Endothelial cell of umbilical vein (primary cell): ENCODE measurements at regions of chr13 and their contacts with region 1.

Region 1: DNA sequence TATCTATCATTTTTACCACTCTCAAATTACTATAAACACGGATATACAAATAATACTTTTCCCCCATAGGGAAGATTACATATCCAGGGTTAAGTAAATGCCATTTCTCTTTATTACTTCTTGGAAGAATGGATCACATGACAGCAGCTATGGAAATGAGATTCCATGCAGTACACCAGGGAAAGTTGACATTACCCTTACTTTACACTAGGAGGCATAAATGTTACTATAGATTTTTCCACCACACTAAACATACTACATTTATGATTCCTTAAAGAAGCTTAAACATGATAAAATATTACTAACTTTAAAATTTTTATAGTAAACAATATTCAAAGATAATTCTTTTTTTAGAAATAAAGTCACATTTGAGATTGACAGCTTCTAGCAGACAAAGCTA is 611.4 kb downstream of the PCDH9 start:
- DNase-seq: peak; percentile 60
- H3K4me3 ChIP-seq: no peak overlapping the region
- H3K27ac ChIP-seq: no peak overlapping the region
- H3K4me1 ChIP-seq: no peaks in the 10 kb centered on the region
- H3K27me3 ChIP-seq: no peaks in the 10 kb centered on the region
- CTCF ChIP-seq: peak; percentile 23 to 24
- POLR2A ChIP-seq: no peak

Region 2: GRCh38 chr13:66323745-66324144 is 295.0 kb before region 1 on chr13:
- CTCF ChIA-PET with region 1: no interaction called
- POLR2A ChIA-PET with region 1: no interaction called
- dilution Hi-C with region 1: no loop called
- intact Hi-C with region 1: no loop called
- DNase-seq: no peak
- H3K4me3 ChIP-seq: no peak overlapping the region
- H3K27ac ChIP-seq: no peak overlapping the region
- H3K4me1 ChIP-seq: no peaks in the 10 kb centered on the region
- H3K27me3 ChIP-seq: no peaks in the 10 kb centered on the region
- CTCF ChIP-seq: no peak
- POLR2A ChIP-seq: no peak

Region 3: GRCh38 chr13:66359910-66360552 is 258.7 kb before region 1 on chr13:
- CTCF ChIA-PET with region 1: no interaction called
- POLR2A ChIA-PET with region 1: no interaction called
- dilution Hi-C with region 1: no loop called
- intact Hi-C with region 1: no loop called
- DNase-seq: no peak
- H3K4me3 ChIP-seq: no peak overlapping the region
- H3K27ac ChIP-seq: no peak overlapping the region
- H3K4me1 ChIP-seq: no peaks in the 10 kb centered on the region
- H3K27me3 ChIP-seq: no peaks in the 10 kb centered on the region
- CTCF ChIP-seq: no peak
- POLR2A ChIP-seq: no peak

Region 4: DNA sequence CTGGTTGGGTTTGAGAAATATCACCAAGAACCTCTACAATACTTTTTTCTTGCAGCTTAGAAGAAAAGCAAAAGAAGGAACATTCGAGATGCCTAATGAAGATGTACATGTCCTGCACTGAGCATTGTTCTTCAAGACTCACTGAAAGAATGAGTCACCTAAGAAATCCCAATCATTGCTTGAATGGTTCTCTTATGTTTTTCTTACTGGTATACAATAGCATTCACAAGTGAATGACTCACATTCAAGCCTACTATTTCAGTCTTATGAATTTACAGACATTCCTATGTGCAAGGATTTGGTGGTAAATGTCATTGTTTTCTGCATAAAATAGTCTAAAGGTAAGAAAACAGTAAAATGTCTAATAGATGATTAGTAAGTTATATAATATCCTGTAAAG is 16.8 kb after region 1 on chr13:
- CTCF ChIA-PET with region 1: interaction called, 29 read pairs
- POLR2A ChIA-PET with region 1: no interaction called
- dilution Hi-C with region 1: no loop called
- intact Hi-C with region 1: no loop called
- DNase-seq: peak; percentile 89
- H3K4me3 ChIP-seq: no peak overlapping the region
- H3K27ac ChIP-seq: peak overlapping the region; percentile 70
- H3K4me1 ChIP-seq: peaks cover 18% of the 10 kb centered on the region
- H3K27me3 ChIP-seq: no peaks in the 10 kb centered on the region
- CTCF ChIP-seq: no peak
- POLR2A ChIP-seq: no peak

Region 5: DNA sequence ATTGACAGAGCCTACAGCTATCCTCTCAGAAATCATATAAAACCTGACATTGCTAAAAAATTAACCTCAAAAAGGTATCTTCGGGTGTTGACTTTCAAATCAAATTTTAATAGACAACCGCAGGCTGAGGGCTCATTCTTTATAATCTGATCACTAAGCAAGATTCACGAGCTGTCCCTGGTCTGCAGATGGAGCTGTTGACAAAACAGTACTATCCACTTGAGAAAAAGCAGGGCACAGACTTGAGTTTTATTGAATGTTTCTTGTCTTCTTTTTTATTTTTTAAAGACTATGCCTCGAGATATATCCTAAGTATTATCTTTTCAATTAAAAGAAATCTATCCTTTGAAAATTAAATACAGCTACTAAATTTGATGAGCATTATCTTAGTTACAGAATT is 70.9 kb after region 1 on chr13:
- CTCF ChIA-PET with region 1: interaction called, 38 read pairs
- POLR2A ChIA-PET with region 1: no interaction called
- dilution Hi-C with region 1: no loop called
- intact Hi-C with region 1: loop called (anchors 1 kb)
- DNase-seq: peak; percentile 26
- H3K4me3 ChIP-seq: no peak overlapping the region
- H3K27ac ChIP-seq: no peak overlapping the region
- H3K4me1 ChIP-seq: no peaks in the 10 kb centered on the region
- H3K27me3 ChIP-seq: no peaks in the 10 kb centered on the region
- CTCF ChIP-seq: peak in 1 of 2 donors; percentile 23
- POLR2A ChIP-seq: no peak

Region 6: GRCh38 chr13:66994097-66994496 is 375.4 kb after region 1 on chr13:
- CTCF ChIA-PET with region 1: interaction called, 43 read pairs
- POLR2A ChIA-PET with region 1: no interaction called
- dilution Hi-C with region 1: no loop called
- intact Hi-C with region 1: loop called (anchors 1 kb)
- DNase-seq: peak; percentile 81
- H3K4me3 ChIP-seq: peak overlapping the region; percentile 17 to 65 (median 53)
- H3K27ac ChIP-seq: no peak overlapping the region
- H3K4me1 ChIP-seq: peaks cover 16% of the 10 kb centered on the region
- H3K27me3 ChIP-seq: no peaks in the 10 kb centered on the region
- CTCF ChIP-seq: peak; percentile 54 to 79
- POLR2A ChIP-seq: no peak

Region 7: GRCh38 chr13:67224148-67224846 is 605.6 kb after region 1 on chr13:
- CTCF ChIA-PET with region 1: interaction called, 47 read pairs
- POLR2A ChIA-PET with region 1: no interaction called
- dilution Hi-C with region 1: no loop called
- intact Hi-C with region 1: loop called (anchors 1 kb)
- DNase-seq: peak; percentile 88
- H3K4me3 ChIP-seq: peak overlapping the region in 1 of 3 experiments; percentile 21
- H3K27ac ChIP-seq: no peak overlapping the region
- H3K4me1 ChIP-seq: peaks cover 15% of the 10 kb centered on the region
- H3K27me3 ChIP-seq: no peaks in the 10 kb centered on the region
- CTCF ChIP-seq: peak; percentile 51 to 60
- POLR2A ChIP-seq: no peak

Region 8: GRCh38 chr13:67857581-67858310 is 1239.0 kb after region 1 on chr13:
- CTCF ChIA-PET with region 1: no interaction called
- POLR2A ChIA-PET with region 1: no interaction called
- dilution Hi-C with region 1: no loop called
- intact Hi-C with region 1: no loop called
- DNase-seq: no peak
- H3K4me3 ChIP-seq: no peak overlapping the region
- H3K27ac ChIP-seq: no peak overlapping the region
- H3K4me1 ChIP-seq: no peaks in the 10 kb centered on the region
- H3K27me3 ChIP-seq: no peaks in the 10 kb centered on the region
- CTCF ChIP-seq: no peak
- POLR2A ChIP-seq: no peak